ENCODE measurements at regions of chr5 and their contacts with region 1.

Region 1: GRCh38 chr5:88680253-88681132 is 202.5 kb downstream of the MEF2C start:
- DNase-seq: peak; percentile 38 to 78 (median 56)
- H3K4me3 ChIP-seq: peak overlapping the region; percentile 34
- H3K27ac ChIP-seq: no peak overlapping the region
- H3K4me1 ChIP-seq: peaks cover 1% of the 10 kb centered on the region
- H3K27me3 ChIP-seq: peaks cover 4% of the 10 kb centered on the region
- CTCF ChIP-seq: peak; percentile 54 to 76 (median 71)
- EP300 ChIP-seq: no peak
- POLR2A ChIP-seq: no peak

Region 2: DNA sequence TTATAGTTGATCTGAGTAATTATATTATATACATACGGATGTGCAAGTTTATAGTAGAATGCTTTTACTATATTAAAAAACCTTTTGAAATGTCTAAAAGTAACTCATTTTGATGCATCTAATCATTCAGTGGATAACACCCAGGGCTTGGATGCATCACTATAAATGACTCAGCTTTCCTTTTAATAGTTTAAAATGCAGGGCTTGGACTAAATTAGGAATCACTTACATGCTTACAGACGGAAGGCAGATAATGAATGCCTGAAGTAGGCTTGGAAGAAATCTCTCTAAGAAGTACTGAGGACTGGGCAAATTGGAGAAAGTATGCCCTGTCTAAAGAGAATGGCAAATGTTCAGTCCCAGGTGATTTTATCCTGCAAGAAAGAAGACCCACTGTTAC is 905.3 kb before region 1 on chr5:
- intact Hi-C with region 1: loop called in 3 of 4 experiments (anchors 5 to 10 kb)
- DNase-seq: no peak
- H3K4me3 ChIP-seq: no peak overlapping the region
- H3K27ac ChIP-seq: no peak overlapping the region
- H3K4me1 ChIP-seq: no peaks in the 10 kb centered on the region
- H3K27me3 ChIP-seq: no peaks in the 10 kb centered on the region
- CTCF ChIP-seq: no peak
- EP300 ChIP-seq: no peak
- POLR2A ChIP-seq: no peak

Region 3: DNA sequence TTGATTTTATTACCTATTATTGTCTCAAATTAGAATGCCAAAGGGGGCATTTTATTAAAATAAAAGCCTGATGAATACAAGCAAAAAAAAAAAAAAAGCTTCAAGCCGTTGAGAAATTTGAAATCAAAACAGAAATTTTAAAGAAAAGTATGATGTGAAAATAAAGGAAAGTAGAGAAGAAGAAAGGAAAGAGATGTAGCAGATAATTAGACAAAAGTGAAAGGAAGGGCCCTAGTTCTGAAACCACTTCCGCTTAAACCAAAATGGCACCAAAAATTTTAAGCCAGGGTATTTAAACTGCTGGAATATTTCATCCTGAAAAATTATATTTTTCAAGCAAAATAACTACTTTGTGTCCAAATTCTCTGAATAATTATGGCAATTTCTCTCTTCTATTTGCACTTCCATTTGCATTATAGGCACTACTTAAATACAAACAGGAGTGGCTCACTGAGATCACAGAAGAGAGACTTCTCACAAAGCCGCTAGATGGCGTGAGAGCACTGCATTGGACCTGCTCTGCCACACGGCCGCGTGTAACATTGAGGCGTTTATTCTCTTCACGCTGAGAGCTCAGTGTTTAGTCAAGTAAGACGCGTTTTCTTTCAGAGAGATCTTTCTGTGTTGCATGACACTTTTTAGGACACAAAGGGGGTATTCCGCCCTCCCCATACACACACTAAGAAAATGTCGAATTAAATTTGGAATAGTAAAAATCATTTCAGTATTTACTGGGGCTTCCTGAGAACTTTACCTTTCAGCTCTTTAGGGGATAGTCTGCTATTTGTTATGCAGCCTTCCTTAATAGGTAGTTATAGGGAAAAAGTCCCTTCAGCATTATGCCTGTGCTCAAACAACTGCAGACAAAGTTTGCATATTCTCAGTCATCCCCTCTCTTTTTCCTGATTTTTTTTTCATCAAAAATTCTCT is 899.4 kb before region 1 on chr5:
- intact Hi-C with region 1: loop called in 3 of 4 experiments (anchors 5 to 10 kb)
- DNase-seq: peak; percentile 65 to 78 (median 73)
- H3K4me3 ChIP-seq: no peak overlapping the region
- H3K27ac ChIP-seq: no peak overlapping the region
- H3K4me1 ChIP-seq: no peaks in the 10 kb centered on the region
- H3K27me3 ChIP-seq: no peaks in the 10 kb centered on the region
- CTCF ChIP-seq: peak; percentile 43 to 65 (median 65)
- EP300 ChIP-seq: no peak
- POLR2A ChIP-seq: no peak

Region 4: DNA sequence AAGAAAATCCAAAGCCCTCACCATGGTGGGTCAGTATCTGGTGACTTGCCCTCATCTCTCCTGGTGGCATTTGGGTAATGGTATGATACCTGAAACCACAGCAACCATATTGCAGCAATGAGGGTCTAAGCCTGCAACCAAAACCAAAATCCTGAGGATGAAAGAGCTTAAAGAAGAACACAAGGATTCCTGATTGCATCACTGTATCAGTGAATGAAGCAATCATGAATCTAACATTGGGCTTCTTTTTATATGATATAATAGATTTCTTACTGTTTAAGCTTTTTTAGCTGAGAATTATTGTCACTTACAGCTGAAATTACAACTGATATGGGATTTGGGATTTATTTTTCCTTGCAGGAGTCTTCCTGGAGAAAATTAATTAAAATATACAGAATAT is 67.4 kb before region 1 on chr5:
- intact Hi-C with region 1: no loop called
- DNase-seq: no peak
- H3K4me3 ChIP-seq: no peak overlapping the region
- H3K27ac ChIP-seq: no peak overlapping the region
- H3K4me1 ChIP-seq: no peaks in the 10 kb centered on the region
- H3K27me3 ChIP-seq: no peaks in the 10 kb centered on the region
- CTCF ChIP-seq: no peak
- EP300 ChIP-seq: no peak
- POLR2A ChIP-seq: no peak